Activated CD4-positive, alpha-beta T cell treated with anti-CD3 and anti-CD28 coated beads, Interleukin-2, amount 10 ng/mL, durations not matched to agents 7 days and 5 days (primary cell): ENCODE measurements at regions of chr19 and their contacts with region 1.

Region 1: GRCh38 chr19:41263850-41264580 is at the start of gene HNRNPUL1:
- DNase-seq: peak; percentile 99
- H3K4me3 Mint-ChIP-seq: peak within 1 kb of the TSS; percentile 89
- H3K27ac Mint-ChIP-seq: peak within 1 kb of the TSS; percentile 99
- H3K4me1 Mint-ChIP-seq: peaks cover 45% of the 10 kb centered on the region
- H3K27me3 Mint-ChIP-seq: no peaks in the 10 kb centered on the region
- total RNA-seq, gene HNRNPUL1: 333 to 348 TPM

Region 2: GRCh38 chr19:41205994-41206393 is 58.0 kb before region 1 on chr19:
- CTCF ChIA-PET with region 1: interaction called, 28 read pairs
- POLR2A ChIA-PET with region 1: no interaction called
- DNase-seq: no peak
- H3K4me3 Mint-ChIP-seq: no peak overlapping the region
- H3K27ac Mint-ChIP-seq: no peak overlapping the region
- H3K4me1 Mint-ChIP-seq: peaks cover 24% of the 10 kb centered on the region
- H3K27me3 Mint-ChIP-seq: no peaks in the 10 kb centered on the region

Region 3: GRCh38 chr19:41248895-41249294 is 15.1 kb before region 1 on chr19:
- CTCF ChIA-PET with region 1: interaction called, 22 read pairs
- POLR2A ChIA-PET with region 1: no interaction called
- DNase-seq: no peak
- H3K4me3 Mint-ChIP-seq: no peak overlapping the region
- H3K27ac Mint-ChIP-seq: no peak overlapping the region
- H3K4me1 Mint-ChIP-seq: no peaks in the 10 kb centered on the region
- H3K27me3 Mint-ChIP-seq: peaks cover 2% of the 10 kb centered on the region

Region 4: GRCh38 chr19:41298348-41298964 is 34.4 kb after region 1 on chr19:
- CTCF ChIA-PET with region 1: interaction called, 30 read pairs
- POLR2A ChIA-PET with region 1: interaction called, 7 read pairs
- DNase-seq: no peak
- H3K4me3 Mint-ChIP-seq: no peak overlapping the region
- H3K27ac Mint-ChIP-seq: peak overlapping the region; percentile 76
- H3K4me1 Mint-ChIP-seq: peaks cover 89% of the 10 kb centered on the region
- H3K27me3 Mint-ChIP-seq: no peaks in the 10 kb centered on the region

Region 5: DNA sequence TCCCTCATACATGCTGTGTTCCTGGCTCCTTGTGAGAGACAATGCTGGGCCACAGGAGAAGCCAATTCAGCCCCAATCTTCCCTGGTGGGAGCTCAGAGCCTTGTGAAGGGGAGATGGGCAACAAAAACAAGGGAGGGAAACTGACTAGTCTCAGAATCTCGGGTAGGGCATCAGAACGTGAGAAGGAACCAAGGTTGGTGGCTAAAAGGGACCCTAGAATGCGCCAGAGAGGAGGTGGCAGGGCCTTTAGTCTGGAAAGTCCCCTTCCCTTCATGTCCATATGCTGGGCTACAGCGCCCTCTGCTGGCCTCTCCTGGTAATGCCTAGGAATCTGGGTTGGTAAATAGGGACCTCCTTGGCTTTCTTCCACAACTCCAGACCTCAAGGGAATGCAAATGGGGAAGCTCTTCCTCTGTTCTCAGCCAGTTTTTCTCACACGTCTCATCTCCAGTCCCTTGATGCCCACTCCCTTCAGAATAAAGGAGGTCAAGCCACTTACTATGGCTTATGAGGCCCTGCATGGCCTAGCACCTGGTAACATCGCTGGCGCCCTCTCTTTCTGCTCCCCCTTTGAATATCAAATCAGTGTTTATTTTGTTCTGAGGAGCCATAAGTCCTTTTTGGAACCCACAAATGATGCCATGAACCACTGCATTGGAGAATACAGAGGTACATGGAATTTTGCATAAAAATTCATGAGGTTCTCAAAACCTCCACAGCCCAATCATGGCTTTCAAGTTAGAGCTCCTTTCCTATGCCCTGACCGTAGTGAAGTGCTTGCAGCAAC is 44.6 kb after region 1 on chr19:
- CTCF ChIA-PET with region 1: interaction called, 40 read pairs
- POLR2A ChIA-PET with region 1: interaction called, 7 read pairs
- DNase-seq: peak; percentile 93
- H3K4me3 Mint-ChIP-seq: peak overlapping the region; percentile 94
- H3K27ac Mint-ChIP-seq: peak overlapping the region; percentile 99
- H3K4me1 Mint-ChIP-seq: peaks cover 87% of the 10 kb centered on the region
- H3K27me3 Mint-ChIP-seq: no peaks in the 10 kb centered on the region

Region 6: GRCh38 chr19:41341669-41342490 is 77.9 kb after region 1 on chr19:
- CTCF ChIA-PET with region 1: no interaction called
- POLR2A ChIA-PET with region 1: no interaction called
- DNase-seq: no peak
- H3K4me3 Mint-ChIP-seq: peak overlapping the region; percentile 27
- H3K27ac Mint-ChIP-seq: peak overlapping the region; percentile 46
- H3K4me1 Mint-ChIP-seq: peaks cover 55% of the 10 kb centered on the region
- H3K27me3 Mint-ChIP-seq: no peaks in the 10 kb centered on the region